OCI-LY7 (cell line): ENCODE measurements at regions of chr17 and their contacts with region 1.

Region 1: GRCh38 chr17:68291844-68292695 is 775 bp downstream of the ARSG start:
- DNase-seq: peak; percentile 96
- H3K4me3 ChIP-seq: peak overlapping the region; percentile 85
- H3K27ac ChIP-seq: peak overlapping the region; percentile 94
- H3K4me1 ChIP-seq: peaks cover 51% of the 10 kb centered on the region
- CTCF ChIP-seq: peak; percentile 75

Region 2: GRCh38 chr17:67993596-67994361 is 298.3 kb before region 1 on chr17:
- CTCF ChIA-PET with region 1: no interaction called
- POLR2A ChIA-PET with region 1: no interaction called
- intact Hi-C with region 1: loop called (anchors 2 kb)
- DNase-seq: peak; percentile 97
- H3K4me3 ChIP-seq: peak overlapping the region; percentile 95
- H3K27ac ChIP-seq: peak overlapping the region; percentile 88
- H3K4me1 ChIP-seq: peaks cover 27% of the 10 kb centered on the region
- CTCF ChIP-seq: no peak

Region 3: DNA sequence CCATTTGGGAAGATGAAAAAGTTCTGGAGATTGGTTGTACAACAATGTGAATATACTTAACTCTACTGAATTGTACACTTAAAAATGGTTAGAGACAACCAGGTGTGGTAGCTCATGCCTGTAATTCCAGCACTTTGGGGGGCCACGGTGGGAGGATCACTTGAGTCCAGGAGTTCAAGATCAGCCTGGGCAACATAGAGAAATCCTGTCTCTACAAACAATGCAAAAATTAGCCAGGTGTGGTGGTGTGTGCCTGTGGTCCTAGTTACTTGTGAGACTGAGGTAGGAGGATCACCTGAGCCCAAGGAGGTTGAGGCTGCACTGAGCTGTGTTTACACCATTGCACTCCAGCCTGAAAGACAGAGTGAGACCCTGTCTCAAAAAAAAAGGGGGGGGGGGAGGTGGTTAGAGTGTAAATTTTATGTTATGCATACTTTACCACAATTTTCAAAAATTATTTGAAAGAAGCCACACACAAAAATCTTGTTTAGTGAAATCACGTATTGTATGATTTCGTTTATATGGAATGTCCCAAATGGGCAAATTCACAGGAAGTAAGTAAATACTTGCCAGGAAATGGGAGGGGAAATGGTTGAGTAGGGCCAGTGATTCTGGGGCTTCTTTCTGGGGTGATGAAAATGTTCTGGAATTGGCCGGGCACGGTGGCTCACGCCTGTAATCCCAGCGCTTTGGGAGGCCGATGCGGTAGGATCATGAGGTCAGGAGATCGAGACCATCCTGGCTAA is 81.3 kb before region 1 on chr17:
- CTCF ChIA-PET with region 1: interaction called, 4 read pairs
- POLR2A ChIA-PET with region 1: interaction called, 10 read pairs
- intact Hi-C with region 1: no loop called
- DNase-seq: no peak
- H3K4me3 ChIP-seq: no peak overlapping the region
- H3K27ac ChIP-seq: peak overlapping the region; percentile 5
- H3K4me1 ChIP-seq: peaks cover 72% of the 10 kb centered on the region
- CTCF ChIP-seq: no peak

Region 4: DNA sequence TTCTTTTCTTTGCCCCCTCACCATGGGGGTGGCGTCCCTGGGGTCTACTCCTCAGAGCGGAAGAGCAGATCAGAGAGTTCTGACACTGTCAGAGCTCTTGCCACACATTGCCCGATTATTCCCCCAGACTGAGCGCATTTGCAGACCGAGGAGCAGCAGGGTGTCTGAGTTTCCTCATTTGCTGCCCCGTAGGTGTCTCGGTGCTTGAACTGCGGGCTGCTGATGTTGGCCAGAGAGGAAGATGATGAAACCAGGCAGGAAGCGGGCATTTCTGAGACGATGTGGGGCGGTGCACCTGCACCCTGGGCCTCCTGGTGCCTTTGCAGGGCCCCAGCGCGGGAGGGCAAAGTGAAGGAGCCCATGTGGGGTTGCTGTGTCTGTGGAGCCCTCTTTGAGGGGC is 54.4 kb after region 1 on chr17:
- CTCF ChIA-PET with region 1: interaction called, 3 read pairs
- POLR2A ChIA-PET with region 1: interaction called, 36 read pairs
- intact Hi-C with region 1: loop called (anchors 1 kb)
- DNase-seq: peak; percentile 99
- H3K4me3 ChIP-seq: peak overlapping the region; percentile 51
- H3K27ac ChIP-seq: peak overlapping the region; percentile 95
- H3K4me1 ChIP-seq: peaks cover 48% of the 10 kb centered on the region
- CTCF ChIP-seq: no peak; the same call in 1 of the 2 replicates

Region 5: GRCh38 chr17:68398691-68399637 is 106.9 kb after region 1 on chr17:
- CTCF ChIA-PET with region 1: interaction called, 9 read pairs
- POLR2A ChIA-PET with region 1: interaction called, 15 read pairs
- intact Hi-C with region 1: loop called (anchors 1 kb)
- DNase-seq: peak; percentile 92
- H3K4me3 ChIP-seq: no peak overlapping the region
- H3K27ac ChIP-seq: peak overlapping the region; percentile 8
- H3K4me1 ChIP-seq: peaks cover 30% of the 10 kb centered on the region
- CTCF ChIP-seq: peak; percentile 100

Region 6: GRCh38 chr17:68591583-68591982 is 299.5 kb after region 1 on chr17:
- CTCF ChIA-PET with region 1: no interaction called
- POLR2A ChIA-PET with region 1: no interaction called
- intact Hi-C with region 1: no loop called
- DNase-seq: no peak
- H3K4me3 ChIP-seq: no peak overlapping the region
- H3K27ac ChIP-seq: no peak overlapping the region
- H3K4me1 ChIP-seq: no peaks in the 10 kb centered on the region
- CTCF ChIP-seq: no peak